Activated CD4-positive, alpha-beta T cell treated with anti-CD3 and anti-CD28 coated beads for 36 hours (primary cell): ENCODE measurements at regions of chr14 and their contacts with region 1.

Region 1: GRCh38 chr14:24160850-24161804 is at the start of gene IRF9:
- DNase-seq: peak; percentile 98
- ATAC-seq: peak; percentile 89
- H3K4me3 Mint-ChIP-seq: peak within 1 kb of the TSS; percentile 84
- H3K27ac Mint-ChIP-seq: peak within 1 kb of the TSS; percentile 97
- H3K4me1 Mint-ChIP-seq: peaks cover 35% of the 10 kb centered on the region
- H3K27me3 Mint-ChIP-seq: no peaks in the 10 kb centered on the region
- total RNA-seq, gene IRF9: 172 to 209 TPM

Region 2: DNA sequence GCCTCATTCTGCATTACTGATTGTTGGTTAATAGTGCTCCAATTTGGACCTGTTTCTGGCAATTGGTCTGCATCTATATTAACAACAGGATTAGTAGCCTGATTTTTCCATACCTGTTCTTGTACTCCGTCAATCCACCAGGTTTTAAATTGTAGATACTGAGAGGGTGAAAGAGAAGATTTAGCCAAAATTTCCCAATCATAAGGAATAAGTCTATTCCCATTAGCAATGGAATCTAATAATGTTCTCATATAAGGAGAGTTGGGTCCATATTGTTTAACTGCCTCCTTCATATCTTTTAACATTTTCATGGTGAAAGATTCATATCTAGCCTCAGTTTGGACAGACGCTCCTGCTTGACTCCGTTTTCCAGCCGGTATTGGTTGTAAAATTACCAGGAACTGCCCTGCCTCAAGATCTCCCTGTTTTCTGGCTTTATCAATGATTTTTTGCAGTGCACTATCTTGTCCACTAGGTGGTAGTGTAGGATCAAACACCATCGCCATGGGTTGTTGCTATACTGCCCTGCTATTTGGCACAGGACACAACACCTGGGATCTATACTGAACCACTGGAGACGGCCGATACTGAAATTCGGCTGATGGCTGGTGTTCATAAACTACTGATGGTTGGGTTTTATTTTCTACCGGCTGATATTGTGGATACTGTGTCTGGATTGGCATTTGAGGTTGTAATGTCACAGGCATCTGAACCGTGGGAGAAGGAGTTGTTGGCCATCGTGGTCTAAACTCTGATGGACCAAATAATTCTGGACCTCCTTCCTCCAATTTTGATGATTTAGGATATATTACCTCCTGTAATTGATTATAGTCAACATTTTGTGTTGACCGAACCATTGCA is 147.2 kb before region 1 on chr14:
- CTCF ChIA-PET with region 1: interaction called, 3 read pairs
- POLR2A ChIA-PET with region 1: no interaction called
- intact Hi-C with region 1: loop called (anchors 1 to 2 kb)
- DNase-seq: peak; percentile 63
- ATAC-seq: peak; percentile 98
- H3K4me3 Mint-ChIP-seq: no peak overlapping the region
- H3K27ac Mint-ChIP-seq: no peak overlapping the region
- H3K4me1 Mint-ChIP-seq: peaks cover 23% of the 10 kb centered on the region
- H3K27me3 Mint-ChIP-seq: no peaks in the 10 kb centered on the region

Region 3: GRCh38 chr14:24108336-24108874 is 52.7 kb before region 1 on chr14:
- CTCF ChIA-PET with region 1: interaction called, 34 read pairs
- POLR2A ChIA-PET with region 1: interaction called, 27 read pairs
- intact Hi-C with region 1: loop called in 1 of 2 experiments (anchors 1 kb)
- DNase-seq: no peak
- ATAC-seq: no peak
- H3K4me3 Mint-ChIP-seq: peak overlapping the region; percentile 7
- H3K27ac Mint-ChIP-seq: peak overlapping the region; percentile 94
- H3K4me1 Mint-ChIP-seq: peaks cover 24% of the 10 kb centered on the region
- H3K27me3 Mint-ChIP-seq: no peaks in the 10 kb centered on the region

Region 4: DNA sequence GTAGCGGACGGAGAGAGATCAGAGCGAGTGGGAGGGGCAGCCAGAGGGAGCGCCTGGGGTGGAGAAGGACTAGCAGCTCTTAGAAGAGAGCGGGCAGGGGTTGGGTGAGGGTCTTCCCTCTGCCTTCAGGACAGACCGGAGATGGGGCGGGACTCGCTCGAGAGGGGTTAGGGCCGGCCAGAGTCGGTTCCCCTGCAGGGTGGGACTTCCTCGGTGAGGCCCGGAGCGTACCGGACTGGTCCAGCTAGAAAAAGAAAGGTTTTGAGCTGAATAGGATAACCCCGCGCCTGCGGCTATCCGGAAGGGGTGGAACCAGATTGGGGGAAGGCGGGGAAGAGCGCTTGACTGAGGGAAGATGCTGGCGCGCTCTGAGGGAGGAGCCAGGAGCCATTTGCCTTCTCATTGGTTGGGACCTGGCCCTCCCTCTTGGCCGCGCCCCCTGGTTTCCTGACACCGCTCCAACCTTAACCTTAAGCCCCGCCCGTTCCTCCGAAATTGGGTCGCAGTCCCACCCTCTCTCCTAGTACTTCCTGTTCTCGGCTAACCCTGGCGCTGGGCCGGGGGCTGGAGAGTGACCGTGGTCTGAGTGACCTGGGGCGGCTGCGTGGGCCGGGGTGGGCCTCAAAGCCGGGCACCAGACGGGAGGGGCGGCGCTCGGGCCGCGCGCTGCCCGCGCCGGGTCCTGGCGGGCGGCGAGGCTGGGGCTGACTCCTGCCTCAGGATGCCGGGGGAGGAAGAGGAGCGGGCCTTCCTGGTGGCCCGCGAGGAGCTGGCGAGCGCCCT is 14.0 kb before region 1 on chr14 and contains the start of gene RNF31:
- CTCF ChIA-PET with region 1: interaction called, 43 read pairs
- POLR2A ChIA-PET with region 1: interaction called, 36 read pairs
- intact Hi-C with region 1: loop called (anchors 1 kb)
- DNase-seq: peak; percentile 99
- ATAC-seq: peak; percentile 89
- H3K4me3 Mint-ChIP-seq: peak within 1 kb of the TSS; percentile 94
- H3K27ac Mint-ChIP-seq: peak within 1 kb of the TSS; percentile 97
- H3K4me1 Mint-ChIP-seq: peaks cover 57% of the 10 kb centered on the region
- H3K27me3 Mint-ChIP-seq: no peaks in the 10 kb centered on the region
- total RNA-seq, gene RNF31: 73.7 to 98.4 TPM

Region 5: DNA sequence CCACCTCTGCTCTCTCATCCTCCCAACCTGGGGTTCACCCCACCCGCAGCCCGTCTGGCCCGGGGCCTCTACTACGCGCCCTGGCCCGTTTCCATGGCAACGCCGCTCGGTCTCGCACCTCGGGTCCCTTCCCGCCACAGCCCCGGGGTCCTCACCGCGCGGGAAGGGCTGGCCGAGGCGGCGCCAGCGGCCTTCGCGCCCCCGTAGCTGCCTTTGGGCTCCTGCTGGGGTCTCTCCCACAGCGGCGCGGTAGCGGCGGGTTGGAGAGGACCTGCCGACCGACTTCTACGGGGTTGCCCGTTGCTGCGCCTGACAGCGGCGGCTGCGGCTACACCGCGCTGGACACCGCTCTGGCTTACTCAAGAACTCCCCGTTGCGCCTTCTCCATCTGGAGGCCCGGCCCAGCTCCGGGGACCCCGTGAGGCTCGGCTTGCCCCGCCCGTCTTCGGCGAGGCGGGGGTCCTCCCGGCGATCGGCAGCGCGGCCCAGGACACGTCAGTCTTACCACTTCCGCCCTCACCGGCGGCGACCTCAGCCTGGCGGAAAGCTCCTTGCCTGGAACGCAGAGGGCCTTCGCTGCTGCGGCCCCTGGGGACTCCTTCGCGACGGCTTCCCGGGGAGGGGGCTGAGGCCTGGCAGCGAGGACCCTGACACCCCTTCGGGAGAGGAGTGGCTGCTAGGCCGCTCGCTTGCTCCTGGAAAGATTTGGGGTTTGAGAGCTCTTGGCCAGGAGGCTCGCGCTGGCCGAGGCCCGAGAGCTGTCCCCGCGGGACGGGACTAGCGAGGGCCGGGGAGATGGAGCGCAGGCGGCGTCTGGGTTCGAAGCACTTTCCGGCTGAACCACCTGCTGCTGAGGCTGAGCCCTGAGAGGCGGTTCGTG is 34.3 kb after region 1 on chr14 and contains the start of gene TM9SF1:
- CTCF ChIA-PET with region 1: interaction called, 7 read pairs
- POLR2A ChIA-PET with region 1: interaction called, 11 read pairs
- intact Hi-C with region 1: loop called in 1 of 2 experiments (anchors 1 kb)
- DNase-seq: peak; percentile 93
- ATAC-seq: peak; percentile 93
- H3K4me3 Mint-ChIP-seq: peak within 1 kb of the TSS; percentile 90
- H3K27ac Mint-ChIP-seq: peak within 1 kb of the TSS; percentile 93
- H3K4me1 Mint-ChIP-seq: peaks cover 50% of the 10 kb centered on the region
- H3K27me3 Mint-ChIP-seq: no peaks in the 10 kb centered on the region
- total RNA-seq, gene TM9SF1: 17.0 to 24.4 TPM

Region 6: GRCh38 chr14:24241829-24242443 is 80.8 kb after region 1 on chr14:
- CTCF ChIA-PET with region 1: interaction called, 3 read pairs
- POLR2A ChIA-PET with region 1: interaction called, 3 read pairs
- intact Hi-C with region 1: loop called (anchors 1 kb)
- DNase-seq: peak; percentile 97
- ATAC-seq: peak; percentile 83
- H3K4me3 Mint-ChIP-seq: peak overlapping the region; percentile 94
- H3K27ac Mint-ChIP-seq: peak overlapping the region; percentile 99
- H3K4me1 Mint-ChIP-seq: peaks cover 55% of the 10 kb centered on the region
- H3K27me3 Mint-ChIP-seq: no peaks in the 10 kb centered on the region

Region 7: GRCh38 chr14:24310646-24311604 is 149.8 kb after region 1 on chr14 and contains the start of gene LTB4R:
- CTCF ChIA-PET with region 1: interaction called, 13 read pairs
- POLR2A ChIA-PET with region 1: no interaction called
- intact Hi-C with region 1: no loop called
- DNase-seq: peak; percentile 81
- ATAC-seq: peak; percentile 83
- H3K4me3 Mint-ChIP-seq: peak within 1 kb of the TSS; percentile 70
- H3K27ac Mint-ChIP-seq: peak within 1 kb of the TSS; percentile 77
- H3K4me1 Mint-ChIP-seq: peaks cover 61% of the 10 kb centered on the region
- H3K27me3 Mint-ChIP-seq: no peaks in the 10 kb centered on the region
- total RNA-seq, gene LTB4R: 10.1 to 14.2 TPM

Region 8: DNA sequence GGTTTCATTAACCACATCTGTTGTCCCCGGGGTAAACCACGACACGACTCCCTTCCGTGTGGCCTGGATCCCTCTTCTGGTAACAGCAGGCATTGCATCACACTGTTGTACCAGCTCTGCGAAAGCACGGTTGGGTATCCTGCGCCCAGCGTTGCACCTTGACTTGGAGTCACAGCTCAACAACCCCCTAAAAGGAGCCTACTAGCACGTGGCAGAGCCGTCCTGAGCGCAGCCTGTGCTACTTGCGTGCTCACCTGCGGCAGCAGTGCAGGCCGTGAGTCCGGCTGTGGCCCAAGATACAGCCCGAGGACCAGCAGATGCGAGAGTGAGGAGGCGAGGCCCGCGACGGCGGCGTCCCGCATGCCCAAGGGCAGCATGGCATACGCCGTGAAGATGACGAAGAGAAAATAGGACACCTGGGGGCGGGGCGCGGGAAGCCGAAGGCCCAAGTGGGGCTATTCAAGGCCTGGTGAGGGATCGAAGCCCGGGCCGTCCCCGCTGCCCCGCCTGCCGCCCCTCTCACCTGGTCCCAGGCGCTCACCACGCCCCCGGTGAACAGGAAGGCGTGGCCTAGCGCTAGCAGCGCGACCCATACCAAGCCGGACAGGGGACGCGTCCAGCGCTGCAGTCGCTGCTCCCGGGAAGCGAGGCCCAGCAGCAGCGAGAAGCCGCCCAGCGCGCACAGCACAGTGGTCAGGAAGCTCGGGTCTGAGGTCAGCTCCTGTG is 171.3 kb after region 1 on chr14:
- CTCF ChIA-PET with region 1: no interaction called
- POLR2A ChIA-PET with region 1: no interaction called
- intact Hi-C with region 1: no loop called
- DNase-seq: peak; percentile 91
- ATAC-seq: peak; percentile 82
- H3K4me3 Mint-ChIP-seq: peak overlapping the region; percentile 53
- H3K27ac Mint-ChIP-seq: peak overlapping the region; percentile 29
- H3K4me1 Mint-ChIP-seq: peaks cover 27% of the 10 kb centered on the region
- H3K27me3 Mint-ChIP-seq: peaks cover 24% of the 10 kb centered on the region